AG04449 (cell line): ENCODE measurements at regions of chr7 and their contacts with region 1.

Region 1: GRCh38 chr7:143316492-143316891 is 581 bp downstream of the CLCN1 start:
- DNase-seq: no peak
- H3K4me3 ChIP-seq: no peak overlapping the region
- CTCF ChIP-seq: no peak

Region 2: DNA sequence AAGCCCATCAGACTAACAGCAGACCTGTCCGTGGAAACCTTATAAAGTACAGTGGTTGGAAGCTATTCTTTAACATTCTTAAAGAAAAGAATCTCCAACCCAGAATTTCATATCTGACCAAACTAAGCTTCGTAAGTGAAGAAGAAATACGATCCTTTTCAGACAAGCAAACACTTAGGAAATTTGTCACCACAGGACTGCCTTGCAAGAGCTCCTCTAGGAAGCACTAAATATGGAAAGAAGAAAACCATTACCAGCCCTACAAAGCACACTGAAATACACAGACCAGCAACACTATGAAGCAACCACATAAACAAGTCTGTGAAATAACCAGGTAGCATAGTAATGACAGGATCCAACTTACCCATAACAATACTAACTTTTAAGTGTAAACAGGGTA is 744.9 kb before region 1 on chr7:
- CTCF ChIA-PET with region 1: no interaction called
- POLR2A ChIA-PET with region 1: no interaction called
- DNase-seq: no peak
- H3K4me3 ChIP-seq: no peak overlapping the region
- CTCF ChIP-seq: no peak

Region 3: GRCh38 chr7:143305423-143306070 is 10.9 kb before region 1 on chr7:
- CTCF ChIA-PET with region 1: interaction called, 11 read pairs
- POLR2A ChIA-PET with region 1: no interaction called
- DNase-seq: no peak
- H3K4me3 ChIP-seq: no peak overlapping the region
- CTCF ChIP-seq: peak; percentile 73